Activated CD4-positive, alpha-beta memory T cell treated with anti-CD3 and anti-CD28 coated beads for 36 hours (primary cell): ENCODE measurements at regions of chr4 and their contacts with region 1.

Region 1: DNA sequence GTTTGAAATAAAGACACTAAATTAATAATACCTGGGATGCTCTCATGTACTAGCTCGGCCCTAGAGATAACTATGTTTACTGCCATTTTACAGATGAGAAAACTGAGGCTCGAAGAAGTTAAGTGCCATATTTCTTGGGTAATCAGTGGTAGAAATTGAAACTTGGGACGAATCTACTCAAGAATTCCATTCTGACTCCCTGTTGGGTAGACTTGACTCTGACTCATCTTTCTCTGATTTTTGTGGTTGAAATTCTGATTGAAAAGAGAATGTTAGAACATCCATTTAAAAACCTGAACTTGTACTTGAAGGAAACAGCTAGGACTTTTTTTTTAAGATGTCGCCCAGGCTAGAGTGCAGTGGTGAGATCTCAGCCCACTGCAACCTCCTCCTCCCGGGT is 50.1 kb upstream of the NSUN7 start:
- DNase-seq: peak; percentile 21
- H3K4me3 Mint-ChIP-seq: no peak overlapping the region
- H3K27ac Mint-ChIP-seq: peak overlapping the region; percentile 38
- H3K4me1 Mint-ChIP-seq: peaks cover 31% of the 10 kb centered on the region
- H3K27me3 Mint-ChIP-seq: no peaks in the 10 kb centered on the region

Region 2: DNA sequence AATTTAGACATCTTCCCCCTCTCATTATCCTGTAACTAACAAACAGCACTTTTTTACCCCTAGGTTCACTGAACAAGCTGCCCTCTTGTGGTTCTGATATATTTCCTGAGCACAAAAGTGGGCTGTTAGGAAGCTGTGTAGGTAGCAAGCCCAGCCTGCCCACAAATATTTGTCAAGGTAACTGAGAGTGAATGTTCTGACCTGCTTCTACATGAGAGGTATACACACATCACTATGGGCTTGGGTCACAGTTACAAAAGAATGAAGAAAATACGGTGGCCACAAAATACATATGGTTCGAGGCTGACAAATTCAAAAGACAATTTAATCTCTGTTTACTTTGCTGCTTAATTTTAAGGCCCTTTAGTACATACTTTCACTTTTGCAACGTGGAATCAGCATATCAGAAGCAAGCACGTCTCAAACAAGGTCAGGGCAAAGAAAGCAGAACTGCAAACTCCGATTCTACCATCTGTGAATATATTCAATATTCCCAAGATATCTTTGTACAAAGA is 148.6 kb before region 1 on chr4:
- CTCF ChIA-PET with region 1: interaction called, 3 read pairs
- POLR2A ChIA-PET with region 1: no interaction called
- intact Hi-C with region 1: loop called (anchors 1 kb)
- DNase-seq: no peak
- H3K4me3 Mint-ChIP-seq: peak overlapping the region; percentile 49
- H3K27ac Mint-ChIP-seq: no peak overlapping the region
- H3K4me1 Mint-ChIP-seq: peaks cover 22% of the 10 kb centered on the region
- H3K27me3 Mint-ChIP-seq: no peaks in the 10 kb centered on the region

Region 3: DNA sequence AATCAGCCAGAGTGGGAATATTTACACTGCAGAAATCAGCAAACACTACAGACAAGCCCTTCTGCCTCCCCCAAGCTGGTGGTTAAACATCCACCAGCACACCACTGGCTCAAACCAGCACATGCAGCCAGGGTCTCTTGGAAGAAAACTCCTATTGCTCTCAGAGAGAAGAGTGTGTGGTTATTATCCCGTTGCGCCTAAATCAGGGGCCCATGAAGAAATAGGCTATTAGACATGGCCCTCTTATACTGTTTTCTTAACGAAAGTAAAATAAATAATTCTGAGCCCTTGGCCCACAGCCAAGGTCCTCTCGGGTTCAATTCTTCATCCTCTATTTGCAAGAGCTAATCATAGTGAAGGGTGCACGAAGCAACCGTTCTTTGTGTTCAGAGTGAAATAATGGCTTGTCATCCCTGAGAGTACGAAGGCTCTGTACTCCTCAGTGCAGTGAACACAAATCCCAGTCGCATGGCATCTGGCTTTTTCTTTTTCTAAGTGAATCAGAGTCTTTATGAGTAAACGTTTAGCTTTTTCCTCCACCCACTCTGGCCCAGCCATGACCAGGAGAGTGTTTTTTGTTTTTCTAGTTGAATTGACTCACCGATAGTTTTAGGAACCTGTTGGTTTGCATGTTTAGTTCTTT is 36.6 kb before region 1 on chr4:
- CTCF ChIA-PET with region 1: interaction called, 3 read pairs
- POLR2A ChIA-PET with region 1: interaction called, 5 read pairs
- intact Hi-C with region 1: loop called (anchors 1 kb)
- DNase-seq: peak; percentile 79
- H3K4me3 Mint-ChIP-seq: no peak overlapping the region
- H3K27ac Mint-ChIP-seq: peak overlapping the region; percentile 75
- H3K4me1 Mint-ChIP-seq: peaks cover 27% of the 10 kb centered on the region
- H3K27me3 Mint-ChIP-seq: peaks cover 3% of the 10 kb centered on the region

Region 4: GRCh38 chr4:40687676-40688389 is 11.8 kb before region 1 on chr4:
- CTCF ChIA-PET with region 1: interaction called, 4 read pairs
- POLR2A ChIA-PET with region 1: interaction called, 20 read pairs
- intact Hi-C with region 1: loop called (anchors 1 kb)
- DNase-seq: no peak
- H3K4me3 Mint-ChIP-seq: no peak overlapping the region
- H3K27ac Mint-ChIP-seq: peak overlapping the region; percentile 76
- H3K4me1 Mint-ChIP-seq: peaks cover 14% of the 10 kb centered on the region
- H3K27me3 Mint-ChIP-seq: peaks cover 11% of the 10 kb centered on the region

Region 5: DNA sequence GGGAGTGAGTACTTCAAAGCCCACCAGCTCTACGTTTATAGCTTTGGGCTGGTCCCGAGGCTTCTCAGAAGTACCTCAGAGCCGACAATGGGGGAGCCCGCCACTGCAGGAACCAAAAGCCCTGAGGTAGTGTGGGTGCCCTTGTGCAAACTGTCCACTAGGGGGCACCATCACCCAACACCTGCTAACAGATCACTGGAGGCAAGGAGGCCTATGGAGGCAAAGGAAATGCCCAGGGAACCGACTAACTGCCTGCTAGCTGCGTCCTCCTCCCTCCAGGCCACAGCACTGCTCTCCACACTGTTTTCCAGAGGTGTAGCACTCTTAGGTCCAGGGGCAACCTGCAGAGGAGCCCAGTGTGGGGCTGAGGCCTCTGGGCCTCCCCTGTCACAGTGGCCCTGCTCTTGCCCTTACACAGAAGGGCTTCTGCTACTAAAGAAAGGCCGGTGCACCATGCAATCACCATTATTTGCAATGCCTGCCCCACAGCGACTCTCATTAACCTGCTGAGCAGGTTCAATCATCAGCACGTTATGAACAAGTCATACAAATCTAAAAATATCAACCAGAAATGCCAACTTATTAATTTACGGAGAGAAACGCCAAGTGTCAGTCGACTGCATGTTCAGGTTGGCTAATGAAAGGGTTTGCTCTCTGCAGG is 209.2 kb after region 1 on chr4:
- CTCF ChIA-PET with region 1: no interaction called
- POLR2A ChIA-PET with region 1: no interaction called
- intact Hi-C with region 1: loop called (anchors 1 kb)
- DNase-seq: peak; percentile 86
- H3K4me3 Mint-ChIP-seq: no peak overlapping the region
- H3K27ac Mint-ChIP-seq: peak overlapping the region; percentile 83
- H3K4me1 Mint-ChIP-seq: peaks cover 23% of the 10 kb centered on the region
- H3K27me3 Mint-ChIP-seq: no peaks in the 10 kb centered on the region